ENCODE measurements at regions of chr20 and their contacts with region 1.

Region 1: GRCh38 chr20:47272893-47273590 is 83.5 kb downstream of the ZMYND8 start:
- DNase-seq: peak; percentile 46
- ATAC-seq: peak; percentile 59
- H3K4me3 ChIP-seq: no peak overlapping the region
- H3K27ac ChIP-seq: 0 out of 2 replicates have a peak overlapping the region, but pooled peaks have one; percentile 15
- H3K4me1 ChIP-seq: peaks cover 28% of the 10 kb centered on the region
- H3K27me3 ChIP-seq: no peaks in the 10 kb centered on the region
- CTCF ChIP-seq: peak; percentile 77 to 94 (median 81); a peak in 5 of 6 replicates
- EP300 ChIP-seq: no peak
- POLR2A ChIP-seq: no peak
- RAD21 ChIP-seq: peak; percentile 97

Region 2: DNA sequence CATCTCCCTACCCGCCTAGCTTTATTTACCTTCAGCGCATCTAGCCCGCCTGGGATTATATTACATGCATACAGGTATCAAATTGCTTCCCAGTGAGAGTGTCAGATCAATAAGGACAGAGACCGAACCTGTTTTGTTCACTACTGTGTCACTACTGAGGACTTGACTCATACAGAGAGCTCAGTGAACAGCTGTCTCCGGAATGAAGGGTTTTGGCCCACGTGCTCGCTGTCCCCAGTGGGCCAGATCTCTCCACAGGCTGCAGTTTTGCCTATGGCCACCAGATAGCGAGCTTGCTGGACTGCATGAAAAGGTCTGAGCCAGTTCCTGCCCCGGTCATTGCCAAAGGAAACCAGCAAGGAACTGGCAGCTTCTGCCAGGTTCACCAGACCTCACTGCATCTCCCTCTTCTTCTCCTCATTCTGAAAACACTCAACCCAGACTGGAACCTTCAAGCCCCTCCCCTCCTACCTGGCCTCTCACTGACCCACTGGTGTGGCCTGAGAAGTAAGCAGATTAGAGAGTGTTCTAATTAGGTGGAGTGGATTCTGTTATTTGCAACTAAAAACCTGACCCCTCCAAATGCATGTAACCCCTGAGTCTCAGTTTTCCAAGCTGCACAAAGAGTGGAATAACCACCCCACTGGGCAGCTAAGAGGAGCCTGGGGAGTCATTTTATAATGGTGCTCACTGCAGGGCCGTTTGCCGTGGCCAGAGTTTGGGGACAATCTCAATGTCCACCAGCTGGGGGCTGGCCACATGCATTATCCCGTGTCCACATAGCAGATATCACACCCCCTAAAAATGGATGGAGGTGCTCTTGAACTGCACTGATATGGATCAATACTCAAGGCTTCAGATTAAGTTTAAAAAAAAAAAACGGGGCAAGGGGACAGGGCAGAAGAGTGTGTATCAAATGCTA is 67.2 kb before region 1 on chr20:
- CTCF ChIA-PET with region 1: interaction called, 27 read pairs
- POLR2A ChIA-PET with region 1: interaction called, 4 read pairs
- RAD21 ChIA-PET with region 1: interaction called, 4 read pairs
- SMC1A ChIA-PET with region 1: interaction called, 8 read pairs
- in situ Hi-C with region 1: no loop called
- intact Hi-C with region 1: no loop called
- DNase-seq: peak; percentile 31
- ATAC-seq: peak; percentile 91
- H3K4me3 ChIP-seq: no peak overlapping the region
- H3K27ac ChIP-seq: no peak overlapping the region
- H3K4me1 ChIP-seq: no peaks in the 10 kb centered on the region; the same call in 1 of the 2 replicates
- H3K27me3 ChIP-seq: no peaks in the 10 kb centered on the region
- CTCF ChIP-seq: peak; percentile 62 to 76 (median 64)
- EP300 ChIP-seq: no peak
- POLR2A ChIP-seq: no peak
- RAD21 ChIP-seq: peak; percentile 41; the same call in 1 of the 2 replicates

Region 3: DNA sequence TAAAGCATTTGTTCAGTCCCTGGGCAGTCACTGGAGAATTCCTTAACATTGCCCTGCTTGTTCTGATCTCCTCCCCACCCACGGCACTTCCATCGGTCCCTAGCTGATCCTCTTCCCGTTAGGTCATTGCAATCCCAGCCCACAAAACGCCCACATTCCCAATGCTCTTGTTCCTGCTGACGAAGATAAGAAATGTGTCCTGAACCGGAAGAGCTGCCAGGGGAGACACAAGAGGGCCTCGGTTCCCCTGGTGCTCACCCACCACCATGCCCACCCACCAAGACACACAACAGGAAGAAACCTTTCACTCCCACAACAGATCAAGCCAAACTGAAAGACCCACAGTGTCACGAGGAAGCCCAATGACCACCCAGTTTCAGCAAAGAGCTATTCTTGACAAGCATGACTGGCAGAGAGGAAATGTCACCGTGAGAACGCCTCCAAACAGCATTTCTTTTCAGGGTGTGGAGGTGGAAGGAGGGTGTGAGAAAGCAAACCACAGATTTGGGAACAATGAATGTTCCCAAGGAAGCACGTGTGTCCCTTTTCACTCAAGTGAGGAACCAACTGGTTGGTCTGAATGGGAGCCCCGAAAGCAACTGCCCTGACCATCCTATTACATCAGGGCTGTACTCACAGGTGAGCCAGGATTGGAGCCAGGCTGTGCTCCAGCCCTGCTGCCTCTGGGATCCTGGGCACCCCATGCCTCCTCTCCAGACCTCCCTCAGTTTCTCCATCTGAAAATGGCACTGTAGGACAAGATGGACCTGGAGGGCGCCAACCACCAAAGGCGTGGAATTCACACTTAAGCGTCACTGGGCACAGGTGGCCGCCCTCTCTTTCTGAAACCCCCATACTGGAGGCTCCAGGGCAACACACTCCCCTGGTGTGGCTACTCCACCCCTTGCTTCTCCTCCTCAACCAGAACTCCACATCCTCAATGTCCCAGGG is 14.0 kb before region 1 on chr20:
- CTCF ChIA-PET with region 1: interaction called, 148 read pairs
- POLR2A ChIA-PET with region 1: interaction called, 28 read pairs
- RAD21 ChIA-PET with region 1: interaction called, 70 read pairs
- SMC1A ChIA-PET with region 1: interaction called, 123 read pairs
- in situ Hi-C with region 1: no loop called
- intact Hi-C with region 1: no loop called
- DNase-seq: peak; percentile 98
- ATAC-seq: peak; percentile 62
- H3K4me3 ChIP-seq: peak overlapping the region; percentile 3; the same call in 1 of the 2 replicates
- H3K27ac ChIP-seq: peak overlapping the region; percentile 86
- H3K4me1 ChIP-seq: peaks cover 58% of the 10 kb centered on the region
- H3K27me3 ChIP-seq: no peaks in the 10 kb centered on the region
- CTCF ChIP-seq: no peak
- EP300 ChIP-seq: peak in 1 of 2 experiments; percentile 90; a peak in 2 of 4 replicates
- POLR2A ChIP-seq: no peak; the same call in 1 of the 2 replicates
- RAD21 ChIP-seq: no peak

Region 4: GRCh38 chr20:47317127-47317895 is 44.3 kb after region 1 on chr20:
- CTCF ChIA-PET with region 1: interaction called, 10 read pairs
- POLR2A ChIA-PET with region 1: no interaction called
- RAD21 ChIA-PET with region 1: no interaction called
- SMC1A ChIA-PET with region 1: interaction called, 8 read pairs
- in situ Hi-C with region 1: no loop called
- intact Hi-C with region 1: no loop called
- DNase-seq: no peak
- ATAC-seq: peak; percentile 50
- H3K4me3 ChIP-seq: no peak overlapping the region
- H3K27ac ChIP-seq: peak overlapping the region; percentile 54
- H3K4me1 ChIP-seq: peaks cover 28% of the 10 kb centered on the region
- H3K27me3 ChIP-seq: no peaks in the 10 kb centered on the region
- CTCF ChIP-seq: no peak
- EP300 ChIP-seq: no peak
- POLR2A ChIP-seq: no peak
- RAD21 ChIP-seq: no peak

Region 5: GRCh38 chr20:47392015-47392720 is 119.1 kb after region 1 on chr20:
- CTCF ChIA-PET with region 1: interaction called, 9 read pairs
- POLR2A ChIA-PET with region 1: no interaction called
- RAD21 ChIA-PET with region 1: interaction called, 5 read pairs
- SMC1A ChIA-PET with region 1: interaction called, 4 read pairs
- in situ Hi-C with region 1: loop called (anchors 10 kb)
- intact Hi-C with region 1: no loop called
- DNase-seq: no peak
- ATAC-seq: peak; percentile 90
- H3K4me3 ChIP-seq: no peak overlapping the region
- H3K27ac ChIP-seq: peak overlapping the region; percentile 11
- H3K4me1 ChIP-seq: peaks cover 20% of the 10 kb centered on the region
- H3K27me3 ChIP-seq: no peaks in the 10 kb centered on the region
- CTCF ChIP-seq: no peak
- EP300 ChIP-seq: no peak
- POLR2A ChIP-seq: 0 out of 2 replicates have a peak, but pooled peaks have one; percentile 26
- RAD21 ChIP-seq: no peak

Region 6: DNA sequence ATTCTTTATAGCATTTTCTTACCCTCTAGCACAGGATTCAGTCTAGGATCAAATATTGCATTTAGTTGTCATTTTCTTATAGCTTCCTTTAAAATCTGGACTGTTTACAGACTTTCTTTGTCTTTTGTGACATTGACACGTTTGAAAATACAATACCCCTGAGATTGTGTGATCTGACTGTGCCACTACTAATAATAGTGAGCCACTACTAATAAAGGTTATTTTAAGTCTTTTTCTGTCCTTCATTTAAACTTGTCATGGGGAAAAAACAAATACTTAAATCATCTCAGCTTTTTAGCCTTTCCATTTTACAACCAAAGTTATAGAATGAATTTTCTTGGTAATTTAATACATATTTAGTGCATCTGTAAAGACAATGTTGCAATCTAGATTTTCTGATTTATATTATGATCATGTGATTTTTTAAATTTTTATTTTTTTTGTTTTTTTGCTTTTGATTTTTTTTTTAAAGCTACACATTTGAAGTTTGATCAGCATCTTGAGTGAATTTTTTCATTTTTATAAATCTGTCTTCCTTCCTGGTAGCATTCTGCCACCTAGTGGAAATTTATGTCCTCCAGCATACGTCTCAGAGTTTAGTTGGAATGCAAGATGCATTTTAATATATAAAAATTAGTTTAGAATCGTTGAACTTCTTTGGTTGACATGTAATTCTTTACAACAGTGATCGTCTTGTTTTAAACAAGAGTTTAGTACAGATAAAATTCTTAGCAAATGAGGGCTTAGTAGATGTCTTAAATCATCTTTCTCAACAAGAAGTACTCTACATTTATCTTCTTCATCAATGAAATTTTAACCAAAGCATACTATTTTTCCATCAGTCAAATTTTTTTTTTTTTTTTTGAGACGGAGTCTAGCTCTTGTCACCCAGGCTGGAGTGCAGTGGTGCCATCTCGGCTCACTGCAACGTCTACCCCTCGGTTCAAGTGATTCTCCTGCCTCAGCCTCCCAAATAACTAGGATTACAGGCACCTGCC is 348.1 kb after region 1 on chr20:
- CTCF ChIA-PET with region 1: interaction called, 40 read pairs
- POLR2A ChIA-PET with region 1: no interaction called
- RAD21 ChIA-PET with region 1: interaction called, 13 read pairs
- SMC1A ChIA-PET with region 1: interaction called, 23 read pairs
- in situ Hi-C with region 1: loop called (anchors 5 kb)
- intact Hi-C with region 1: loop called (anchors 2 kb)
- DNase-seq: peak; percentile 32
- ATAC-seq: peak; percentile 79
- H3K4me3 ChIP-seq: no peak overlapping the region
- H3K27ac ChIP-seq: peak overlapping the region; percentile 33
- H3K4me1 ChIP-seq: peaks cover 10% of the 10 kb centered on the region
- H3K27me3 ChIP-seq: no peaks in the 10 kb centered on the region
- CTCF ChIP-seq: peak; percentile 59 to 68 (median 60)
- EP300 ChIP-seq: no peak
- POLR2A ChIP-seq: no peak
- RAD21 ChIP-seq: peak; percentile 89